Posterior cingulate gyrus (tissue), 11 donors: ENCODE measurements at regions of chr2 and their contacts with region 1.

Region 1: DNA sequence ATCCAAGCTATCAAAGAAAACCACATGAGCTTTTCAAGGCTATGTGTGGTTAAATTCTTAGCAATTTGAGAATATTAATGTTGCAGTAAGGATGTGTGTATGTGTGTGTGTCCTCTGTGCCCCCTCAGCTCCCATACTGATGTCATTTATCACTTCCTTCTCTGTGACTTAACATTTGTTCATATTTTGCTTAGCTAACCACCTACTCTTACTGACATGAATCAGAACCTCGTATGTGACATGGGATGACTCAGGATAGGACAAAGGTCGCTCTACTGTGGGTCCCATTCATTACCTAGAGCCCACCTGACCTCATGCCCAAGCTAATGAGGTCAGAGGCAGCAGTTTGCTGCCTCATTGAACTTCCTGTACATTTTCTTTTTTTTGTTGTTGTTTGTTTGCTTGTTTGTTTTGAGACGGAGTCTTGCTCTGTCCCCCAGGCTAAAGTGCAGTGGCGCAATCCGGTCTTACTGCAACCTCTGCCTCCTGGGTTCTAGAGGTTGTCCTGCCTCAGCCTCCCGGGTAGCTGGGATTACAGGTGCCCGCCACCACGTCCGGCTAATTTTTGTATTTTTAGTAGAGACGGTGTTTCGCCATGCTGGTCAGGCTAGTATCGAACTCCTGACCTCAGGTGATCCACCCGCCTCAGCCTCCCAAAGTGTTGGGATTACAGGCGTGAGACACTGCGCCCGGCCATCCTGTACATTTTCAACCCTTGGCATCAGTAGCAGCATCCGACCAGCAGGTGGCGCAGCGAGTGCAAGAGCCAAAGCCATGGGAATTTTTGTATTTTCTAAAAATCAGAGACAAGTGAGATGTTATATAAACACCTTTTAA is 36.4 kb downstream of the MOGAT1 start:
- DNase-seq: peak; percentile 75 to 97 (median 87)

Region 2: GRCh38 chr2:222743251-222743812 is 35.4 kb after region 1 on chr2:
- intact Hi-C with region 1: loop called (anchors 5 kb)
- DNase-seq: no peak

Region 3: DNA sequence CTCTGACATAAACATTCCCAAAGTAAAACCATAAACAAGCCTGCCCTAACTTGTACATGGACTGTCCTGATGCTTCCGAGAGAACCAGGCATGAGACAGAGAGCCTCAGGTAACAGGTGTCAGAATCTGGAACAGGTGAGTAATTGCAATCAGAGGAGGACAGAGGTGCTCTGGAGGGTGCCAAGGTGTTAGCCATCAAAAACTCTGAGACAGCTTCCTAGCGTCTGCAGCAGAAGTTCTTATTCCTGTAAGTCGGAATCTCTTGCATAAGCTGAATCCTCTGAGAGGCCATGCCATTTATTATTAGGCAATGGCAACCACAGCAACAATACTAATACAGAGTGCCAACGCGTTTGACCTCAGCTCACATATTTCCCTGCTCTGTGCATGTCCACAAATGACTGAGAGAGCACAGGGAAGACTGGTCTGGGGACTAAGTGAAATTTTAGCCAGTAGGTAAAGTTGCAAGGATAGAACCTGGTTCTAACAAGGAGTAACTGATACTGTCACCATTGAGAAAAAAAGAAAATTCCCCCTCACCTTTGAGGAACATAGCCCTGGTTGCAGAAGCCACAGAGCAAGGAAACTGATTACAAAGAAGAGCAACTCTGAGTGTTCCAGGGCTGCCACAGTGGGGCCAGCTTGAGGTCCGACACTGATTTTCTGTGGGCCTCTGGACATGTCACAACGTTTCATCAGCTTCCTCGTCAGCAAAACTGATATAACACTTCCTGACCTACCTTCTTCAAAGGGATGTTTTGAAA is 97.8 kb after region 1 on chr2:
- intact Hi-C with region 1: loop called (anchors 10 kb)
- DNase-seq: no peak

Region 4: GRCh38 chr2:222860740-222861410 is 153.0 kb after region 1 on chr2 and contains the start of gene ACSL3:
- intact Hi-C with region 1: loop called (anchors 1 kb)
- DNase-seq: peak; percentile 95 to 100 (median 98)

Region 5: DNA sequence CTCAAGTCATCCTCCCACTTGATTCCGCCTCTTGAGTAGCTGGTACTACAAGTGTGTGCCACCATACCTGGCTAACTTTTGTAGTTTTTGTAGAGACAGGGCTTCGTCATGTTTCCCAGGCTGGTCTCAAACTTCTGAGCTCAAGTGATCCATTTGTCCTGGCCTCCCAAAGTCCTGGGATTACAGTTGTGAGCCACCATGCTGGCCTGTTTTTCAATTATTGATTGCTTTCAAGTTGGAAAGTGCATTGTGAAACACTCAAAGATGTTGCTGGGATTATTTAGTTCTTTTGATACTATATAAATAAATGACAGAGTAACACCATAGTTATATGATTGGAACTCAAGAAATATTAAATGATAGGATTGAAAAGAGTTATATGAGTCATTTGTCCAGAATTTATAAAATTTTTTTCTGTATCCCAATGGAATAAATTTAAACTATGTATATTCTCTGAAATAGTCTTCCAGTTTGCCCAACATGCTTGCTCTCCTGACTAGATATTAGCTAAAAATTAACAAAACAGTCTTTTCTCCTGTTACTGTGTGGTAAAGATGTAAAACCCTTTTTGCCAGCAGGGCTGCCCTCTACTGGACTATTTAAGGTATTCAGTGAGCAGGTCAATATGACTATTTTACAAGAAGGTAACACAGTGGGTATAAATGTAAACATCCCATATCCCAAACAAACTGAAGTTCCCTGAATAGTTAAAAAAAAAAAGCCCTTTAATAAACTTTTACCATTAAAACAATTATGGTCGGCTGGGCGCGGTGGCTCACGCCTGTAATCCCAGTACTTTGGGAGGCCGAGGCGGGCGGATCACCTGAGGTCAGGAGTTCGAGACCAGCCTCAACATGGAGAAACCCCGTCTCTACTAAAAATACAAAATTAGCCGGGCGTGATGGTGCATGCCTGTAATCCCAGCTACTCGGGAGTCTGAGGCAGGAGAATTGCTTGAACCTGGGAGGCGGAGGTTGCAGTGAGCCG is 195.6 kb after region 1 on chr2:
- intact Hi-C with region 1: loop called (anchors 1 kb)
- DNase-seq: peak in 1 of 10 donors; percentile 27